Caco-2 (cell line): ENCODE measurements at regions of chr6 and their contacts with region 1.

Region 1: DNA sequence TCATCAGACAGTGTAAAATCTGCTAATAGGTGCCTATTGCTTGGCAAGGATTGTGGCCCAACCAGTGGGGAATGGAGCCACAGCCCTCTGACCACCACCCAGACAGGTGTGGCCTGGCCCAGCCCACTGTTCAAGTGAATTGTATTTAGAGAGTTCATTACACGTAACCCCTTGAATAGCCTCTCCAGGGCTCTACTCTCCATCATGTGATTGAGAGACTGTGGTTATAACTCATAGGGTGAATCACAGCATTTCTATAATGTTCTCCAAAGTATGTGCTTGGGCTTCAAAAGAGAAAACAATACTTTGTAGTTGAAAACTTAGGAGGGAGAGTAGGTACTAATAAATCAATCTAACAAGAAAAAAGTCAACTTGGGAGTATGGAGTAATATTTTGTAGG is 38.4 kb downstream of the ALDH8A1 start:
- DNase-seq: no peak
- H3K4me3 ChIP-seq: no peak overlapping the region
- H3K4me3 Mint-ChIP-seq: no peak overlapping the region
- H3K27ac Mint-ChIP-seq: no peak overlapping the region
- H3K4me1 ChIP-seq: peaks cover 3% of the 10 kb centered on the region; the same call in 1 of the 2 replicates
- H3K4me1 Mint-ChIP-seq: no peaks in the 10 kb centered on the region
- H3K27me3 ChIP-seq: no peaks in the 10 kb centered on the region
- H3K27me3 Mint-ChIP-seq: no peaks in the 10 kb centered on the region
- CTCF ChIP-seq: no peak

Region 2: GRCh38 chr6:133906050-133906449 is 1005.5 kb before region 1 on chr6:
- CTCF ChIA-PET with region 1: no interaction called
- POLR2A ChIA-PET with region 1: interaction called, 10 read pairs
- intact Hi-C with region 1: no loop called
- DNase-seq: no peak
- H3K4me3 ChIP-seq: no peak overlapping the region
- H3K4me3 Mint-ChIP-seq: no peak overlapping the region
- H3K27ac Mint-ChIP-seq: no peak overlapping the region
- H3K4me1 ChIP-seq: no peaks in the 10 kb centered on the region
- H3K4me1 Mint-ChIP-seq: no peaks in the 10 kb centered on the region
- H3K27me3 ChIP-seq: no peaks in the 10 kb centered on the region
- H3K27me3 Mint-ChIP-seq: peaks cover 9% of the 10 kb centered on the region
- CTCF ChIP-seq: no peak